ENCODE measurements at regions of chr11 and their contacts with region 1.

Region 1: GRCh38 chr11:57493507-57494503 is 21.7 kb downstream of the SLC43A1 start:
- DNase-seq: peak; percentile 51 to 56 (median 54)
- H3K4me3 ChIP-seq: no peak overlapping the region
- H3K27ac ChIP-seq: no peak overlapping the region
- H3K4me1 ChIP-seq: no peaks in the 10 kb centered on the region
- H3K27me3 ChIP-seq: no peaks in the 10 kb centered on the region

Region 2: DNA sequence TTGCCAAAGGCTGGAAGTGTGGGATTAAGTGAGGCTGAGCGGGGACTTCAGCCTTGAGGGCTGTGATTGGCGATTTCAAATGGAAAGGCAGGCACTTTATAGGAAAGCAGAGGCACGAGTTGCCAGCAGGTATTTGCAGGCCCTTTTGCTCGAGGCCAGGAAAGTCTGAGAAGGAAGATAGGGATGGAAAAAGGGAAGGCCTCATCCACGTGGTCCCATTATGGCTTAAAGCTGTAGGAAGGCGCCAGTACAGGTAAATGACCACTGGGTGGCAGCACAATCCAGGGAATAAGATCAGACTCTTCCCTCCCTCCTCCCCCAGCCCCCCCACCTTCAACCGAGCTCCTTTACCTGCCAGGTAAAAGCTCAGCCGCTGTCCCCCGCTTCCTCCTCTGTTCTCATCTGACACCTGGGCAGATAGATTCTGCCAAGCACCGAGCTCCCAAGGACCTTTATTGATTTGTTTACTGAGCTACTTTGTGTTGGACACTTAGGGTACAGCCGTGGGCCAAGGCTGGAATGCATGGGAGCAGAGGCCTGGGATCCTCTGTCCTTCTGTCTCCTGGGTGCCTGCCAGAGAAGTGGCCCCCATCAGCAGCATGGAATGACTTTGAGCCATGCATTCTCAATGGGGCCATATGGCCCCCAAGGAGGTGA is 148.1 kb before region 1 on chr11:
- CTCF ChIA-PET with region 1: interaction called, 10 read pairs
- POLR2A ChIA-PET with region 1: no interaction called
- DNase-seq: peak; percentile 60 to 71 (median 61)
- H3K4me3 ChIP-seq: no peak overlapping the region
- H3K27ac ChIP-seq: no peak overlapping the region
- H3K4me1 ChIP-seq: peaks cover 0 to 11% (median 2%) of the 10 kb centered on the region in 4 experiments
- H3K27me3 ChIP-seq: no peaks in the 10 kb centered on the region

Region 3: DNA sequence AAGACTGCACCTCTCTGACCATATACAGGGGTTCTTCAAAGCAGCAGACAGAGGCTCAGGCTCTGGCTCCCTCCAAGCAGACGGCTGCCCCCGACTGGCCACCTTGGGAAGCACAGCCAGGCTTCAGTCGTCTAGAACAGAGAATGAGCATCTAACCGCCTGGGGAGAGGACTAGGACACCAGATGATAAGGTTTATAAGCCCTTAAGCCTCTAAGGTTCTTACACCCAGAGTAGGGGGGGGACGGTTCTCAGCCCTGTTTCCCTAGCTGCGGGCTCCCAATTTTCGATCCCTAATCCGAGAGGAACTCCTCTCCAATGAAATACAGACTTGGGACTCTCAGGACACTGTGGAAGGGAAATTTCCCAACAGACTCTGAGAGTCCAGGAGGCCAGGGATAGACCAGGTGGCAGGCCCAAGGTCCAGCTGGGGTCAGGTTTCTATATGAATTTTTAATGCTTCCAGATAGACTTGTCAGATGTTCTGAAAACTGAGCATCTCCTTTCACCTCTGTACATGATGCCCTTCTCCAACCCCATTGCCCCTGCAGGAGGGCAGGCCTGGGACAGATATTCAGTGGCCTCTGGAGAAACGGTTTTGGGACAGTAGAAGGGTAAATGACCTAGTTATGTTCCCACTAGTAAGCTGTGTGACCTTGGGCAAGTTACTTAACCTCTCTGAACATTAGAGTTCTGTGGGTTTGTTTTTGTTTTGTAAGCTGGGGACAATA is 13.2 kb before region 1 on chr11:
- CTCF ChIA-PET with region 1: interaction called, 45 read pairs
- POLR2A ChIA-PET with region 1: no interaction called
- DNase-seq: peak in 2 of 3 donors; percentile 72 to 73
- H3K4me3 ChIP-seq: no peak overlapping the region
- H3K27ac ChIP-seq: no peak overlapping the region
- H3K4me1 ChIP-seq: peaks cover 18 to 62% (median 55%) of the 10 kb centered on the region in 4 experiments
- H3K27me3 ChIP-seq: peaks cover 0 to 4% (median 0%) of the 10 kb centered on the region in 5 experiments

Region 4: DNA sequence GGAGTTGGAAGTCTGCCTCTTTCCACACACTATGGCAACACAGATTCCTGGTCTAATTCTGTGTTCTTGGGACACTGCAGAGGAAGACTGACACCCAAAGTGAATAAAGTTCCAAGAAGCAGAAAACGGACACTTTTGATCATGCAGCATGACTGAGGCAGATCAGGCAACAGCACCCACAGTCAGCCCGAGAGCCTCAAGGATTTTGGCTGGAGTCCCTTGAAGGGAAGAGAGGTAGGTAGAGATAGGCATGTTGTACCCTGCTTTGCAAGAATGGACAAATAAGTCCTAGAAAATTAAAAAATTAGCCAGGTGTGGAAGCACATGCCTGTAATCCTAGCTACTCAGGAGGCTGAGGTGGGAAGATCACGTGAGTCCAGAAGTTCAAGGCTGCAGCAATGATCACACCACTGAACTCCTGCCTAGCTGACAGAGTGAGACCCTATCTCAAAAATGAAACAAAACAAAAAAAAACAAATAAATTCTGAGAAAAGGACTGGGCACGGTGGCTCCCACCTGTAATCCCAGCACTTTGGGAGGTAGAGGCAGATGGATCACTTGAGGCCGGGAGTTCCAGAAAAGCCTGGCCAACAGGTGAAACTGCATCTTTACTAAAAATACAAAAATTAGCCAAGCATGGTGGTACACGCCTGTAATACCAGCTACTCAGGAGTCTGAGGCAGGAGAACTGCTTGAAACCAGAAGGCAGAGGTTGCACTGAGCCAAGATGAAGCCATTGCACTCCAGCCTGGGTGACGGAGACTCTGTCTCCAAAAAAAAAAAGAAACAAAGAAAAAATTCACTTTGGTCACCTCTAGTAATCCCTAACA is 14.8 kb after region 1 on chr11:
- CTCF ChIA-PET with region 1: interaction called, 158 read pairs
- POLR2A ChIA-PET with region 1: interaction called, 4 read pairs
- DNase-seq: no peak
- H3K4me3 ChIP-seq: no peak overlapping the region
- H3K27ac ChIP-seq: no peak overlapping the region
- H3K4me1 ChIP-seq: peaks cover 0 to 11% (median 7%) of the 10 kb centered on the region in 4 experiments
- H3K27me3 ChIP-seq: no peaks in the 10 kb centered on the region

Region 5: DNA sequence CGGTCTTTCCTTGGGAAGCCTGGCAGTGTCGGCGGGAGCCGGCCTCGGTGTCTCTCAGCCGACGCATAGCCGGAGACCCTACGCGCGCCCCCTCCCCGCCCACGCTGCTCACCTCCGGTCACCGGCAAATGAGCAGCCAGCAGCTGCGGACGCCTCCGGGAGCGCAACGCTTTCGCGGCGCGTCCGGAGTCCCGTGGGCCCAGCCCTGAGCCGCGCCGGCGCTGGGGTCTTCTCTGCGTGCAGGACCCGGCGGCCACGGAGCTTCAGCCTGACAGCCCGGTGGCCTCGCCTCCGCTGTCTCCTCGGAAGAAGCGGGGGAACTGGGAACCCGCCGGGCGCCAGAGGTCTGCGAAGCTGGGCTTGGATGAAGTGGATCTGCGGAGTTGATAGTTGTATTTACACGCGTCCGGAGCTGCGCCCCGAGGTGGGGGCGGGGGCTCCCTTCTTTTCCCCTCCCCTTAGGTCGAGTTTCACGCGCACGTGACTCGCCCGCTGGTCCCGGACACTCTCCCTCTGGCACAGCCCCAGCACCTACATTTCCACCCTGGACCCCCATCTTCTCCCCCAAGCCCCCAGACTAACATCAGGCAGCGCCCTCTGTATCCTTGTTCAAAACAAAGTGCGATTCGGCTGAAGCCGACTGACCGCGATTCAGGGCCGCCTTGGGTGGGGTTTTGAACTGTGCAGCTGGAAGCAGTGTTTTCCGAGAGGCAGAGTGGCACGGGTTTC is 21.7 kb after region 1 on chr11 and contains the start of gene SLC43A1:
- CTCF ChIA-PET with region 1: interaction called, 158 read pairs
- POLR2A ChIA-PET with region 1: interaction called, 5 read pairs
- DNase-seq: peak; percentile 31 to 44 (median 38)
- H3K4me3 ChIP-seq: peak within 1 kb of the TSS; percentile 75 to 95 (median 89)
- H3K27ac ChIP-seq: peak within 1 kb of the TSS in 1 of 2 experiments; percentile 49
- H3K4me1 ChIP-seq: peaks cover 4 to 32% (median 26%) of the 10 kb centered on the region in 4 experiments
- H3K27me3 ChIP-seq: no peaks in the 10 kb centered on the region

Region 6: GRCh38 chr11:57567515-57568329 is 73.9 kb after region 1 on chr11 and contains the start of gene UBE2L6:
- CTCF ChIA-PET with region 1: interaction called, 11 read pairs
- POLR2A ChIA-PET with region 1: no interaction called
- DNase-seq: peak; percentile 54 to 85 (median 66)
- H3K4me3 ChIP-seq: peak within 1 kb of the TSS; percentile 76 to 97 (median 94)
- H3K27ac ChIP-seq: peak within 1 kb of the TSS; percentile 46 to 76
- H3K4me1 ChIP-seq: peaks cover 13 to 62% (median 34%) of the 10 kb centered on the region in 4 experiments
- H3K27me3 ChIP-seq: no peaks in the 10 kb centered on the region